CD4-positive, alpha-beta T cell (primary cell): ENCODE measurements at regions of chr2 and their contacts with region 1.

Region 1: GRCh38 chr2:219521066-219521880 is 7.0 kb downstream of the ASIC4 start:
- DNase-seq: peak in 2 of 14 experiments; percentile 20 to 21
- ATAC-seq: no peak
- H3K4me3 ChIP-seq: no peak overlapping the region
- H3K4me3 Mint-ChIP-seq: no peak overlapping the region
- H3K27ac ChIP-seq: no peak overlapping the region
- H3K27ac Mint-ChIP-seq: no peak overlapping the region
- H3K4me1 ChIP-seq: peaks cover 19% of the 10 kb centered on the region
- H3K4me1 Mint-ChIP-seq: peaks cover 20% of the 10 kb centered on the region
- H3K27me3 ChIP-seq: peaks cover 62 to 97% of the 10 kb centered on the region in 2 experiments
- H3K27me3 Mint-ChIP-seq: peaks cover 89% of the 10 kb centered on the region
- CTCF ChIP-seq: no peak

Region 2: GRCh38 chr2:219362524-219363164 is 158.6 kb before region 1 on chr2:
- CTCF ChIA-PET with region 1: no interaction called
- POLR2A ChIA-PET with region 1: no interaction called
- intact Hi-C with region 1: no loop called
- DNase-seq: peak in 3 of 14 experiments; percentile 7 to 56 (median 43)
- ATAC-seq: no peak
- H3K4me3 ChIP-seq: no peak overlapping the region
- H3K4me3 Mint-ChIP-seq: no peak overlapping the region
- H3K27ac ChIP-seq: no peak overlapping the region
- H3K27ac Mint-ChIP-seq: no peak overlapping the region
- H3K4me1 ChIP-seq: peaks cover 9% of the 10 kb centered on the region
- H3K4me1 Mint-ChIP-seq: no peaks in the 10 kb centered on the region
- H3K27me3 ChIP-seq: peaks cover 18 to 21% of the 10 kb centered on the region in 2 experiments
- H3K27me3 Mint-ChIP-seq: peaks cover 23% of the 10 kb centered on the region
- CTCF ChIP-seq: no peak

Region 3: GRCh38 chr2:219509780-219510511 is 11.3 kb before region 1 on chr2:
- CTCF ChIA-PET with region 1: interaction called, 10 read pairs
- POLR2A ChIA-PET with region 1: interaction called, 4 read pairs
- intact Hi-C with region 1: no loop called
- DNase-seq: peak in 13 of 14 experiments; percentile 26 to 73 (median 43)
- ATAC-seq: peak; percentile 94
- H3K4me3 ChIP-seq: no peak overlapping the region
- H3K4me3 Mint-ChIP-seq: peak overlapping the region; percentile 28
- H3K27ac ChIP-seq: no peak overlapping the region
- H3K27ac Mint-ChIP-seq: no peak overlapping the region
- H3K4me1 ChIP-seq: peaks cover 33% of the 10 kb centered on the region
- H3K4me1 Mint-ChIP-seq: peaks cover 25% of the 10 kb centered on the region
- H3K27me3 ChIP-seq: peaks cover 49 to 59% of the 10 kb centered on the region in 2 experiments
- H3K27me3 Mint-ChIP-seq: peaks cover 61% of the 10 kb centered on the region
- CTCF ChIP-seq: peak; percentile 61

Region 4: DNA sequence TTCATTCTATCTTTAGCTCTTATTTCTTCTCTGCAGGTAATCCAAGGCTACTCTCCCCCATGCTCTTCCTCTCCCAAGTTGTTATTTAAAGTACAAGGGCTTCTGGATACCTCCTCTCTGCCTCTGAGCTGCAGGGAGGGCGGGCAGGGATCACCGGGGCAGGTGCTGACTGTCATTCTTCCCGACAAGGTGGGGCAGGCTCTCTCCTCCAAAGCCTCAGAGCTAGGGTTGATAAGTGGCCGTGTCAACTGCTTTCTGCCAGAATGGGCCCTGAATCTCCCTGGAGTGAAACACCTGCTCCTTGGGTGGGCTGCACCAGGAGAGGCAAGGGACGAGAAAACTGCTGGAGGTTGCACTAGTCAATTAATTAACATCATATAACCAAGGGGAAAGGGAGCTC is 356.5 kb after region 1 on chr2:
- CTCF ChIA-PET with region 1: no interaction called
- POLR2A ChIA-PET with region 1: no interaction called
- intact Hi-C with region 1: no loop called
- DNase-seq: no peak
- ATAC-seq: no peak
- H3K4me3 ChIP-seq: no peak overlapping the region
- H3K4me3 Mint-ChIP-seq: no peak overlapping the region
- H3K27ac ChIP-seq: no peak overlapping the region
- H3K27ac Mint-ChIP-seq: no peak overlapping the region
- H3K4me1 ChIP-seq: no peaks in the 10 kb centered on the region
- H3K4me1 Mint-ChIP-seq: no peaks in the 10 kb centered on the region
- H3K27me3 ChIP-seq: peaks cover 0 to 2% of the 10 kb centered on the region in 2 experiments
- H3K27me3 Mint-ChIP-seq: peaks cover 3% of the 10 kb centered on the region
- CTCF ChIP-seq: no peak